GM12878 (cell line): ENCODE measurements at regions of chr5 and their contacts with region 1.

Region 1: GRCh38 chr5:132064738-132065331 is 4.4 kb downstream of the IL3 start:
- DNase-seq: peak; percentile 45
- ATAC-seq: peak; percentile 91
- H3K4me3 ChIP-seq: no peak overlapping the region
- H3K27ac ChIP-seq: no peak overlapping the region
- H3K4me1 ChIP-seq: no peaks in the 10 kb centered on the region; the same call in 1 of the 2 replicates
- H3K27me3 ChIP-seq: no peaks in the 10 kb centered on the region; a peak in 1 of 4 replicates
- CTCF ChIP-seq: peak; percentile 93 to 97 (median 97)
- EP300 ChIP-seq: no peak
- POLR2A ChIP-seq: no peak
- RAD21 ChIP-seq: peak; percentile 90

Region 2: GRCh38 chr5:131810510-131811249 is 254.2 kb before region 1 on chr5:
- CTCF ChIA-PET with region 1: interaction called, 7 read pairs
- POLR2A ChIA-PET with region 1: no interaction called
- RAD21 ChIA-PET with region 1: interaction called, 7 read pairs
- SMC1A ChIA-PET with region 1: interaction called, 11 read pairs
- in situ Hi-C with region 1: no loop called
- intact Hi-C with region 1: loop called (anchors 1 kb)
- DNase-seq: no peak
- ATAC-seq: peak; percentile 75
- H3K4me3 ChIP-seq: no peak overlapping the region
- H3K27ac ChIP-seq: no peak overlapping the region
- H3K4me1 ChIP-seq: peaks cover 5% of the 10 kb centered on the region; the same call in 1 of the 2 replicates
- H3K27me3 ChIP-seq: no peaks in the 10 kb centered on the region
- CTCF ChIP-seq: peak; percentile 18 to 52 (median 42); a peak in 4 of 6 replicates
- EP300 ChIP-seq: no peak
- POLR2A ChIP-seq: no peak
- RAD21 ChIP-seq: peak; percentile 77

Region 3: DNA sequence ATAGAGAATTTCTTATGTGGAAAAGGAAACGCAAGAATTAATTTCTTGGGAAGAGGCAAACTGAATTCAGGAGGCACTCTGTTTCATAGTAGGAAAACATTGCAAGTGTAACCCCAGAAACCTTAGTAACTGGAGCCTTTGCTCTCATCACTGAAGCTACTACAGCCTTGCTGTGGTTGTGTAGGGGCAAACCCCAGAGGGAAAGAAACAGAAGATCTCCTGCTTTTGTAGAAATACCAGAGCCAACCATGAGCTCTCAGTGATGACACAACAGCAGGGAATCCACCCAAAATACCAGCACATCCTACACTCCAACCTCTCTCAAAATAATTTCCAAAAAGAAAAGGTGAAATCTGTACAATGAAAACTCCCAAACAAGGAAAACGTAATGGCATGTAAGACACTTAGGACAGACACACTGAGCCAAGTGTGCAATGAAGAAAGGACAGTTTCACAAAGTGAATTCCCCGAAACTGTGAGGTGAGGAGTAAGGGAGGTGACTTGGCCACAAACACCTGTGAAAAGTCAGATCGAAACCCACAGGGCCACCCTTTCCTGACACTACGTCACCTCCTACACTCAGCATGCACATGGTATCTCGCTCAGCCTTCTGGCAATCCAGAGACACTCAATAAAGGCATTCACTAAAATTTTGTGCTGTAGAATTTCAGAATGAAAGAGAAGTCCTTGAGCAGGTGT is 44.8 kb before region 1 on chr5:
- CTCF ChIA-PET with region 1: interaction called, 4 read pairs
- POLR2A ChIA-PET with region 1: no interaction called
- RAD21 ChIA-PET with region 1: no interaction called
- SMC1A ChIA-PET with region 1: no interaction called
- in situ Hi-C with region 1: no loop called
- intact Hi-C with region 1: loop called (anchors 1 kb)
- DNase-seq: peak; percentile 76
- ATAC-seq: peak; percentile 98
- H3K4me3 ChIP-seq: 0 out of 2 replicates have a peak overlapping the region, but pooled peaks have one; percentile 23
- H3K27ac ChIP-seq: no peak overlapping the region
- H3K4me1 ChIP-seq: peaks cover 33% of the 10 kb centered on the region
- H3K27me3 ChIP-seq: peaks cover 0 to 16% of the 10 kb centered on the region in 2 experiments
- CTCF ChIP-seq: no peak
- EP300 ChIP-seq: peak; percentile 78 to 91; a peak in 3 of 4 replicates
- POLR2A ChIP-seq: no peak
- RAD21 ChIP-seq: no peak

Region 4: GRCh38 chr5:132103332-132103951 is 38.6 kb after region 1 on chr5:
- CTCF ChIA-PET with region 1: interaction called, 4 read pairs
- POLR2A ChIA-PET with region 1: no interaction called
- RAD21 ChIA-PET with region 1: no interaction called
- SMC1A ChIA-PET with region 1: no interaction called
- in situ Hi-C with region 1: no loop called
- intact Hi-C with region 1: loop called (anchors 2 kb)
- DNase-seq: peak; percentile 78
- ATAC-seq: peak; percentile 76
- H3K4me3 ChIP-seq: 0 out of 2 replicates have a peak overlapping the region, but pooled peaks have one; percentile 14
- H3K27ac ChIP-seq: peak overlapping the region; percentile 98
- H3K4me1 ChIP-seq: peaks cover 67% of the 10 kb centered on the region
- H3K27me3 ChIP-seq: no peaks in the 10 kb centered on the region
- CTCF ChIP-seq: peak in 2 of 3 experiments; percentile 16 to 28; a peak in 2 of 6 replicates
- EP300 ChIP-seq: peak; percentile 38 to 65; a peak in 2 of 4 replicates
- POLR2A ChIP-seq: peak; percentile 60; the same call in 1 of the 2 replicates
- RAD21 ChIP-seq: peak; percentile 39; the same call in 1 of the 2 replicates

Region 5: GRCh38 chr5:132180134-132180745 is 115.4 kb after region 1 on chr5:
- CTCF ChIA-PET with region 1: interaction called, 41 read pairs
- POLR2A ChIA-PET with region 1: no interaction called
- RAD21 ChIA-PET with region 1: interaction called, 6 read pairs
- SMC1A ChIA-PET with region 1: interaction called, 6 read pairs
- in situ Hi-C with region 1: loop called (anchors 5 kb)
- intact Hi-C with region 1: loop called (anchors 1 kb)
- DNase-seq: no peak
- ATAC-seq: peak; percentile 63
- H3K4me3 ChIP-seq: no peak overlapping the region
- H3K27ac ChIP-seq: no peak overlapping the region
- H3K4me1 ChIP-seq: peaks cover 11% of the 10 kb centered on the region
- H3K27me3 ChIP-seq: no peaks in the 10 kb centered on the region
- CTCF ChIP-seq: peak; percentile 66 to 69 (median 69)
- EP300 ChIP-seq: no peak
- POLR2A ChIP-seq: no peak
- RAD21 ChIP-seq: peak; percentile 84

Region 6: DNA sequence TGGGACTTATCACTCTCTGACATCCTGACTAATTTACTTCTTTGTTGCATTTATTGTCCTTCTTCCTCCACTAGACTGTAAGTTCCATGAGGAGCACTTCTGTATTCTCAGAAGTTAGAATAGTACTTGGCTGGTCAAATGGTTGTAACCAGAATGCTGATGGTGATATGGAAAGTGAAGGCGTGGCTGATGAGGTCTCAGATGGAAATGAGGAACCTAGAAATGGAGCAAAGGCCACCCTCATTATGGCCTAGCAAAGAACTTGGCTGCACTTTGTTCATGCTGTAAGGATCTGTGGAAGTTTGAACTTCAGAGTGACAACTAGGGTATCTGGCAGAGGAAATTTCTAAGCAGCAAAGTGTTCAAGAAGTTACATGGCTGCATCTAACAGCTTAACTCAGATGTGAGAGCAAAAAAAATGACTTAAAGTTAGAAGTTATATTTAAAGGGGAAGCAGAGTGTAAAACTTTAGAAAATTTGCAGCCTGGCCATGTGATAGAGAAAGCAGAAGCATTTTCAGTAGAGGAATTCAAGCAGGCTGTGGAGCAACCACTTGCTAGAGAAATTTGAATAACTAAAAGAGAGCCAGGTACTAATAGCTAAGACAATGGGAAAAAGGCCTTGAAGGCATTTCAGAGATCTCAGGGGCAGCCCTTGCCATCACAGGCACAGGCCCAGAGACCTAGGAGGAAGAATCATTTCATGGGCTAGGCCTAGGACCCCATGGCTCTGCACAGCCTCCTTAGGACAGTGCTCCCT is 289.7 kb after region 1 on chr5:
- CTCF ChIA-PET with region 1: interaction called, 3 read pairs
- POLR2A ChIA-PET with region 1: no interaction called
- RAD21 ChIA-PET with region 1: no interaction called
- SMC1A ChIA-PET with region 1: interaction called, 3 read pairs
- in situ Hi-C with region 1: loop called (anchors 5 kb)
- intact Hi-C with region 1: loop called (anchors 5 kb)
- DNase-seq: no peak
- ATAC-seq: peak; percentile 12; the same call in 1 of the 3 replicates
- H3K4me3 ChIP-seq: no peak overlapping the region
- H3K27ac ChIP-seq: no peak overlapping the region
- H3K4me1 ChIP-seq: peaks cover 12% of the 10 kb centered on the region
- H3K27me3 ChIP-seq: no peaks in the 10 kb centered on the region
- CTCF ChIP-seq: no peak
- EP300 ChIP-seq: no peak
- POLR2A ChIP-seq: no peak
- RAD21 ChIP-seq: no peak

Region 7: DNA sequence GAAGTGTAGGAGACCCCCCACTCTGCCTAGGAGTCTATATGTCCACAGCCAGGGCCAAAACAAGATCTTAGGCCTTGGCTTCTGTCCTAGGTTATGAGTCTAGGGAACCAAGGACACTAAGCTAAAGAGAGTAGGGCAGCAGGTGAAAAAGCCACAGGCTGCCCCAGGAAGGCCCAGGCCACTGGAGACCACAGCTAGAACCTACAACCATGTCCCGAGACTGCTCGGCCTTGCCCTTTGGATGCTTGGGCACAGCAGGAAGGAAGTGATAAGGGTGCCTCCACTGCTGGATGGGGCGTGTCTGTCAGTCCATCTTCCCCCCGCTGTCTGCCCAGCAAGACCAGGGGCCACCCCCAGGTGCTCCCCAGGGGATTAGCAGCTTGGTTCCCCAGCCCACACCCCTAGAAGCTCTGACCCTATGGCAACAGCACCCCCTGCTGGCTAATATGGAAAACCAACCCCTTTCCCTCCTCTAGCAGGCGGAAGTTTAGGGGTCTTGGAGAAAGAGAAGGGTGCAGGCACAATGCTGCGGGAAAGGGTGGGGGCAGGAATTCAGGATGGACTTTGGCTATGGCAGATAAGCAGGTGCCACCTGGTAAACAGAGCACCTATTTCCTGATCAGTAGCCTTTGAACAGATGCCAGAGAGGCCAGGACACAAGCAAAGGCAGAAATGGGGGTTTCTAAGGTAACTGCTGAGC is 436.2 kb after region 1 on chr5:
- CTCF ChIA-PET with region 1: no interaction called
- POLR2A ChIA-PET with region 1: no interaction called
- RAD21 ChIA-PET with region 1: no interaction called
- SMC1A ChIA-PET with region 1: no interaction called
- in situ Hi-C with region 1: loop called (anchors 10 kb)
- intact Hi-C with region 1: loop called (anchors 2 kb)
- DNase-seq: no peak
- ATAC-seq: peak; percentile 55
- H3K4me3 ChIP-seq: no peak overlapping the region
- H3K27ac ChIP-seq: peak overlapping the region; percentile 42; the same call in 1 of the 2 replicates
- H3K4me1 ChIP-seq: peaks cover 34% of the 10 kb centered on the region
- H3K27me3 ChIP-seq: no peaks in the 10 kb centered on the region
- CTCF ChIP-seq: peak; percentile 80 to 94 (median 85); a peak in 5 of 6 replicates
- EP300 ChIP-seq: 0 out of 4 replicates have a peak, but pooled peaks of 1 of the 2 experiments have one; percentile 11
- POLR2A ChIP-seq: no peak
- RAD21 ChIP-seq: peak; percentile 100